Activated CD8-positive, alpha-beta T cell treated with anti-CD3 and anti-CD28 coated beads, Interleukin-2, amount 10 ng/mL, durations not matched to agents 7 days and 5 days (primary cell): ENCODE measurements at regions of chr7 and their contacts with region 1.

Region 1: DNA sequence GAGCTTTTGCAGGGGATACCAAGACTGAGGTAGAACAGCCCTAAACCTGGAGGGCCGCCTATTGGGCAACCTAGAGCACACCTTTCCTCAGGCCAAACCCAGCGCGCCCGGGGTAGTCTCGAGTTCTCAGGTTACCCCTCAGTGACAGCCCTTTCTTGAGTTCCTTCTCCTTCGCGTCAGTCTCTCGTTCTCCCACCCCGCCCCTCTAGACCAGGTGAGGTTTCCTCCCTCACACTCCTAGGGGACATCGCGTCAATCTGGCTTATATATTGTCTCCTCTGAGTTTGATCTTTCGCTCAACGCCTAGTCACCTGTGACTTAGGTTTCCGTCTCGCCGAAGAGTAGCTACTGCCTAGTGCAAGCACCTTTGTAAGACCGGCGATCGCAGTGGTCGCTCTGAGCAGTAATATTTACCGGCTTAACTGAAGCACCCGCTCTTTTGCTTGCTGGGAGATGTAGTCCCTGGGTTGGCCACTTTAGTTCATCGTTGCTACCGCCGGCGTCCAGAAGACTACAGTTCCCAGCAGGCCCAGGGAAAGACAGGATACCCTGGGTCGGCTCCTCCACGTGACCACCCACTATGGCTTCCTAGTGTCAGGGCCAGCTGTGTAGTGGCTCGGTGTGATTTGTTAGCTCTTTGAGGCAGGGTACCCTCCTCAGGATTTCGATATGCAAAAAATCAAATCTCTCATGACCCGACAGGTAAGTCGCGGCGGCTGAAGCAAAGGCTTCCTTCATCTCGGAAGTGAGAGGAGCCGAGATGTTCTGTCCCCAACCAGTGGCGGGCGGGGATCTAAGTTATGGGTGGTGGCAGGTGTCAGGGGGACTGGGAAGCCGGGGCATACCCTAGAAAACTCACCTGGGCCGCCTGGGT is at the start of gene VPS50:
- DNase-seq: peak; percentile 97
- ATAC-seq: peak; percentile 98
- H3K4me3 Mint-ChIP-seq: peak within 1 kb of the TSS; percentile 98
- H3K27ac Mint-ChIP-seq: peak within 1 kb of the TSS; percentile 97
- H3K4me1 Mint-ChIP-seq: peaks cover 19% of the 10 kb centered on the region
- H3K27me3 Mint-ChIP-seq: peaks cover 6% of the 10 kb centered on the region
- total RNA-seq, gene VPS50: 19.3 to 22.1 TPM

Region 2: DNA sequence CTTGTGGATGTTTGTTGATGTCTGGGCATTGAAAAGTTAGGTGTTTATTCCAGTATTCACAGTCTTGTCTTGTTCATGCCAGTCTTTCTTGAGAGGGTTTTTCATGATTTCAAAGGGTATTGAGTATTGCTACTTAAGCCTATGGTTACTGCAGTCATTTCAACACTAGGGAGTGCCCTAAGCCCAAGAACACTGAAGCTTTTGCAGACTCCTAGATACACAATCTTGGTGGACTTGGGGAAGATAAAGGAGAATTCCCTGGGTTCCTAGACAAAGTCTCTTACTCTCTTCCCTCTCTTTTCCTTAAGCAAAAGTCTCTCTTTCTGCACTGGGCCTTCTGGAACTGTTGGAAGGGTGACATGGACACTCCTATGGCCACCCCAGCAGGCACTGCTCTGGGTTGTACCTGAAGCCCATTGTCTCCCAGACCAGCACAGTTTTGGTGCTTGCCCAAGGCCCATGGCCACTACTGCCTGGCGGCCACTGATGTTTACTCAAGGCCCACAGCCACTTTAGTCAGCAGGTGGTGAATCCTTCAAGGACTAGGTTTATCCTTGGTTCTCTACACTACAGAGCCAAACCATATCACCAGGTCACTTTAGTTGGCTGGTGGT is 139.2 kb before region 1 on chr7:
- CTCF ChIA-PET with region 1: interaction called, 11 read pairs
- POLR2A ChIA-PET with region 1: no interaction called
- DNase-seq: no peak
- ATAC-seq: peak; percentile 53
- H3K4me3 Mint-ChIP-seq: no peak overlapping the region
- H3K27ac Mint-ChIP-seq: no peak overlapping the region
- H3K4me1 Mint-ChIP-seq: no peaks in the 10 kb centered on the region
- H3K27me3 Mint-ChIP-seq: peaks cover 15% of the 10 kb centered on the region

Region 3: DNA sequence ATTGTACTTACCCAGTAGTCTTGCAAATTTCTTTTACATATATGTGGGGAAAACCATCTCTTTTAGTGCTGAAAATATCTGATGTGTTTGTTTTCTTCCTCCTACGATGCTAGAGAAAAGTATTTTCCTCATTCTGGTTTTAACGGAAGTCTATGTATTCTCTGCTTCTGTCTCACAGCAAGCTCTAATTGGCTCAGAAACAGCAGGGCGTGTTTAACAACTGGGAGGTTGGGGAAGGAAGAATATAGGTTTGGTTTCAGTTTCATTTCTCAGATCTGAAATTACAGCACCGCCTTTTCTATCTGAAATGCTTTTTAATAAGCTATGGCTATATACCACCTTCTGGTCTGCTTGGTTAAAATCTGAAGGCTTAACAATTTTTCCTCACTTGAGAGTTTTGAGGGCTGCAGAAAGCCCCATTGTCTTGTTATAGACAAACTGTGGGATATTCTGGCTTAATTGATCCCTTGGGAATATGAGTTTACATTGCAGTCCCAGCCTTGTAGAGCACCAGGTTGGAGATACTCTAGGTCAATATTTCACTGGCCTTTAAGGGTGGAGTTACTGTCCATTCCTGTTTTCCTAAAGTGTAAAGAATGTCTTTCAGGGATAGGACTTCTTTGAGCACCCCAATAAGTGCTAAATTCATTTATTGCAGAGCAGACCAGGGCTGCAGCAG is 114.0 kb before region 1 on chr7 and contains the start of gene SAMD9:
- CTCF ChIA-PET with region 1: interaction called, 8 read pairs
- POLR2A ChIA-PET with region 1: interaction called, 10 read pairs
- DNase-seq: peak; percentile 80
- ATAC-seq: peak; percentile 98
- H3K4me3 Mint-ChIP-seq: peak within 1 kb of the TSS; percentile 88
- H3K27ac Mint-ChIP-seq: peak within 1 kb of the TSS; percentile 89
- H3K4me1 Mint-ChIP-seq: peaks cover 43% of the 10 kb centered on the region
- H3K27me3 Mint-ChIP-seq: no peaks in the 10 kb centered on the region
- total RNA-seq, gene SAMD9: 49.0 to 51.0 TPM

Region 4: DNA sequence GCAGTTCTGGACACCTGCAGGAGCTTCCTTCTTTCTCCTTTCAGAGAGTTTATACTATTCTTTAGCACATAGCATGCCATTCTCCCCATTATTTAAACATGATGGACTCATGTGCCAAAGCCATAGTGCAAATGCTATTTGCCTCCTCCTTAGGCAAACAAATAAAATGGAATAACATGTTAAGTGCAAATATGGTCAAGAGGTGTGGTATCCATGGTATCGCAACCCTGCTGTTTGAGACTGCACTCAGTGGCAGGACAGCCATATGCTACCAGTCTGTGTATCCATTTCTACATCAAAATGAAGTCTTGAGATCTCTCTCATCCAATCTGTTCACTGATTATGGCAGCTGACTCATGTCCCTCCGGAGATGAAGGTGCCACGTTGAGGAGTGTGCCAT is 28.5 kb before region 1 on chr7:
- CTCF ChIA-PET with region 1: no interaction called
- POLR2A ChIA-PET with region 1: no interaction called
- DNase-seq: no peak
- ATAC-seq: no peak
- H3K4me3 Mint-ChIP-seq: no peak overlapping the region
- H3K27ac Mint-ChIP-seq: no peak overlapping the region
- H3K4me1 Mint-ChIP-seq: no peaks in the 10 kb centered on the region
- H3K27me3 Mint-ChIP-seq: peaks cover 37% of the 10 kb centered on the region

Region 5: DNA sequence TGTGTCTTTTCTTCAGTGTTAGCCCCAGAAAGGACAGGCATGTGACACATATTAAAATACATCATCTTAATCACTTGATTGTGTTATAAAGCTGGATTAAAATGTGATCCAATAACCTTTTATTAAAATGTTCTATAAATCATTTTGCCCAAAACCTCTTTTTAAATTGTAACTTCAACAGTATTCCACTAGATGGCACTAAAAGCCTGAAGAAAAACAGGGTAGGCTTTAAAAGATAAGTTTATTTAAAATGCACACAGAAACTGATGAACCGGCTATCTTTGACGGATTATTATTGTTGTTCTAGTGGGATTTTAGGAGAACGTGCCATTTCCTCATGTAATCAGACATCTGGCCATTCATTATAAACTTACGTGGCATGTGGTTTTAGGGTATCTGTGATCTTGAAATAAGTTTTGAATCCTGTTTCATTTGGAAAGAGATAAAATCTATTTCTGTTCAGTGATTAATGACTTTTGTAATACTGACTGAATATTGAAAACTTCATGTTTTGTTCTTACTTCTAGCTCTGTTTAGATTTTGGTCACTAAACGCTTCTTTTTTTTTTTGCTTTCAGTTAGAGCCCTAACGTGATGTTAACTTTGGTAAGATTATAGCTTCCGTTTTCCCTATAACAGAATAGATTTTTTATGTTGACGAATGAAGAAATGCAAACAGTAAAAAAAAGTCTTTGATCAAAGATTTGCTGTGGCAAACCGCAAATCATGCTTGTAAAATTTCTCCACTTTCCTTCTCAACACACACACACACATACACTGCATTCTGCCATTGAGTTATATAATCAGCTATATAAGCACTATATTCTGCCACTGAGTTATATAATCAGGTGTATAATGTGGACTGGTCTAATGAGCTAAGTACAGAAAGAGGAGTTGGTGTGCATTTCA is 13.7 kb after region 1 on chr7:
- CTCF ChIA-PET with region 1: interaction called, 20 read pairs
- POLR2A ChIA-PET with region 1: interaction called, 3 read pairs
- DNase-seq: no peak
- ATAC-seq: no peak
- H3K4me3 Mint-ChIP-seq: no peak overlapping the region
- H3K27ac Mint-ChIP-seq: no peak overlapping the region
- H3K4me1 Mint-ChIP-seq: no peaks in the 10 kb centered on the region
- H3K27me3 Mint-ChIP-seq: no peaks in the 10 kb centered on the region